ENCODE measurements at regions of chr10 and their contacts with region 1.

Region 1: DNA sequence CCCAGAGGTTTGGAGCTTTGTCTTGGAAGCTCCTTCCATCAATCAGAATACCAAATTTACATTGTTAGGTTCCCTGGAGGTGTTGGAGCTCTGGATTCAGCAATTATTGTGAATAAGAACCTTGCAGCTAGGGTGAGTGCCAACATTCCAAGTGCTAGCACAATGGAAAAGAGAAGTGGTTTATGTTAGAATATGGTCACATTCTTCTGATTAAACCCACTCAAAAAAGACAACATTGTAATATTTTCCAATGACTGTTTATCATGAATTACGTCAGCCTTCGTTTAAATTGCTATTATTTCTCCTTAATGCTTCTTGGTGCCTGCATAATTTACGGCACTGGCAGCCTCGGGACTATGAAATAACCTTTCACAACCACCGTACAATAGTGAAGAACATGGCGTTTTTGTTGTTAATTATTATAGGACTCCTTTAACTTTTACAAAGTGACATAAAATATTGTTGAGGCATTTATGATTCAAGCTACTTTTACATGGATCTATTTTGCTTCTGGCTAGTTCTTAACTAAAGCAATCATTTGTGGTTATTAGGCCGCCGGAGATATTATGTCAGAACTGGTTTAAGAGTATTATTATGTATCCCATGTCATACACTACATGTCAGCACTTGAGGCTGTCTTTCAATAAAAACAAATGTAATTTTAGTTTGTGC is 117.7 kb downstream of the ARID5B start:
- DNase-seq: no peak
- H3K4me3 Mint-ChIP-seq: peak overlapping the region; percentile 39
- H3K27ac Mint-ChIP-seq: peak overlapping the region; percentile 99
- H3K4me1 Mint-ChIP-seq: peaks cover 90% of the 10 kb centered on the region
- H3K27me3 Mint-ChIP-seq: no peaks in the 10 kb centered on the region

Region 2: GRCh38 chr10:61896854-61897661 is 122.1 kb before region 1 on chr10:
- CTCF ChIA-PET with region 1: interaction called, 5 read pairs
- intact Hi-C with region 1: loop called (anchors 1 kb)
- DNase-seq: peak; percentile 78
- H3K4me3 Mint-ChIP-seq: peak overlapping the region; percentile 77
- H3K27ac Mint-ChIP-seq: peak overlapping the region; percentile 90
- H3K4me1 Mint-ChIP-seq: peaks cover 40% of the 10 kb centered on the region
- H3K27me3 Mint-ChIP-seq: no peaks in the 10 kb centered on the region

Region 3: GRCh38 chr10:61943674-61944410 is 75.3 kb before region 1 on chr10:
- CTCF ChIA-PET with region 1: interaction called, 3 read pairs
- intact Hi-C with region 1: loop called (anchors 1 kb)
- DNase-seq: peak; percentile 47
- H3K4me3 Mint-ChIP-seq: peak overlapping the region; percentile 62
- H3K27ac Mint-ChIP-seq: peak overlapping the region; percentile 98
- H3K4me1 Mint-ChIP-seq: peaks cover 71% of the 10 kb centered on the region
- H3K27me3 Mint-ChIP-seq: no peaks in the 10 kb centered on the region

Region 4: GRCh38 chr10:61964949-61965702 is 54.0 kb before region 1 on chr10:
- CTCF ChIA-PET with region 1: no interaction called
- intact Hi-C with region 1: loop called (anchors 1 kb)
- DNase-seq: no peak
- H3K4me3 Mint-ChIP-seq: no peak overlapping the region
- H3K27ac Mint-ChIP-seq: peak overlapping the region; percentile 87
- H3K4me1 Mint-ChIP-seq: peaks cover 90% of the 10 kb centered on the region
- H3K27me3 Mint-ChIP-seq: no peaks in the 10 kb centered on the region

Region 5: GRCh38 chr10:61987951-61988379 is 31.2 kb before region 1 on chr10:
- CTCF ChIA-PET with region 1: interaction called, 12 read pairs
- intact Hi-C with region 1: loop called (anchors 1 kb)
- DNase-seq: peak; percentile 64
- H3K4me3 Mint-ChIP-seq: peak overlapping the region; percentile 51
- H3K27ac Mint-ChIP-seq: peak overlapping the region; percentile 96
- H3K4me1 Mint-ChIP-seq: peaks cover 89% of the 10 kb centered on the region
- H3K27me3 Mint-ChIP-seq: no peaks in the 10 kb centered on the region

Region 6: GRCh38 chr10:62001898-62002297 is 17.3 kb before region 1 on chr10:
- CTCF ChIA-PET with region 1: interaction called, 3 read pairs
- intact Hi-C with region 1: loop called (anchors 1 kb)
- DNase-seq: no peak
- H3K4me3 Mint-ChIP-seq: peak overlapping the region; percentile 28
- H3K27ac Mint-ChIP-seq: peak overlapping the region; percentile 86
- H3K4me1 Mint-ChIP-seq: peaks cover 92% of the 10 kb centered on the region
- H3K27me3 Mint-ChIP-seq: no peaks in the 10 kb centered on the region

Region 7: GRCh38 chr10:62038609-62039190 is 19.6 kb after region 1 on chr10:
- CTCF ChIA-PET with region 1: interaction called, 27 read pairs
- intact Hi-C with region 1: no loop called
- DNase-seq: peak; percentile 90
- H3K4me3 Mint-ChIP-seq: peak overlapping the region; percentile 14
- H3K27ac Mint-ChIP-seq: peak overlapping the region; percentile 91
- H3K4me1 Mint-ChIP-seq: peaks cover 85% of the 10 kb centered on the region
- H3K27me3 Mint-ChIP-seq: no peaks in the 10 kb centered on the region